ENCODE measurements at regions of chr16 and their contacts with region 1.

Region 1: DNA sequence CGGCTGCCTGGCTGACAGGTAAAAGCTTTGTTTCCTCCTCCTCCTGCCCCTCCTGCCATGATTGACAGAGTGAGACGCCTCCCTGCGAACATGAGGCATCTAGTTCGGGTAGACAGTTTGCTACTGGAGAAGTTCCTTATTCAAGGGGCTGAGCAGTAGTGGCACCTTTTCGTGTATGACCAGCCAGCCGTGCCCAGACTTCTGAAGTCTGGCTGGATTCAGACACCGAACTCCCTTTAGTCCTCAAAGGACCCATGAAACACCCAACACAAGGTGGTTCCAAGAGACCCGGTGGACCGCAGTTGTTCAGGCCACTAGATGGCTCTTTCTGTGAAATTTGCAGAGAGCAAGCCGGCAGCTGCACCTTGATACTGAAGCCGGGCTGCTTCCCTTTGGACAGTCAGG is 192.8 kb downstream of the XYLT1 start:
- DNase-seq: peak in 1 of 2 donors; percentile 21
- ATAC-seq: peak in 5 of 8 donors; percentile 38 to 77 (median 58)
- H3K4me3 ChIP-seq: no peak overlapping the region
- H3K27ac ChIP-seq: no peak overlapping the region
- H3K4me1 ChIP-seq: peaks cover 0 to 15% (median 0%) of the 10 kb centered on the region in 9 donors
- H3K27me3 ChIP-seq: peaks cover 0 to 11% (median 0%) of the 10 kb centered on the region in 7 donors
- CTCF ChIP-seq: peak in 7 of 9 donors; percentile 32 to 60 (median 55)

Region 2: DNA sequence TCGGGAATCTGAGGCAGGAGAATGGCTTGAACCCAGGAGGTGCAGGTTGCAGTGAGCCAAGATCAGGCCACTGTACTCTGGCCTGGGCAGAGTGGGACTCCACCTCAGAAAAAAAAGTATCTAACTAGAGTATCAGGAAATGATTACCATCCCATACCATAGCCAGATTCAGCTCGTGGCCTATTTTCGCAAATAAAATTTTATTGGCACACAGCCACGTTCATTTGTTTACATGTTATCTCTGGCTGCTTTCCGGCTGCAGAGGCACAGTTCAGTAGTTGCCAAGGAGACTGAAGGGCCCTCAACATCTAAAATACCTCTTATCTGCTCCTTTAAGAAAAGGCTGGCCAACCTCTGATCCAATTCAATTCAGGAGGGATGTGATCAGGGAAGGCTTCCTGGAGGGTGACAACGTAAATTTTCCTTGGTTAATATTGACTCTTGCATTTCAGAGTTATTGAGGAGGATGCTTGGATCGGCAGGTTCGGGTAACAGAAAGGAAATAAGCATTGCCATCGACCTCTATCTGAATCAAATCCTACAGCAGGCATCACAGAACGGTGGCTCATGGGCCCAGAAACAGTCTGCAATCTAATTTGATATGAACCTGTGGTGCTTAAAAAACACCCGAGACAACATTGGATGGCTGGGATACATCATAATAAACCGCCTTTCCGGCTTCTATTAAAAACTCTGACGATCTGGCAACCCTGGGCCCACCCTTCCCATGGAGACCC is 119.0 kb after region 1 on chr16:
- intact Hi-C with region 1: no loop called
- DNase-seq: peak in 1 of 2 donors; percentile 35
- ATAC-seq: peak; percentile 48 to 77 (median 60)
- H3K4me3 ChIP-seq: no peak overlapping the region
- H3K27ac ChIP-seq: peak overlapping the region in 3 of 10 donors; percentile 15 to 52 (median 28)
- H3K4me1 ChIP-seq: peaks cover 4 to 31% (median 22%) of the 10 kb centered on the region in 9 donors
- H3K27me3 ChIP-seq: no peaks in the 10 kb centered on the region
- CTCF ChIP-seq: no peak

Region 3: DNA sequence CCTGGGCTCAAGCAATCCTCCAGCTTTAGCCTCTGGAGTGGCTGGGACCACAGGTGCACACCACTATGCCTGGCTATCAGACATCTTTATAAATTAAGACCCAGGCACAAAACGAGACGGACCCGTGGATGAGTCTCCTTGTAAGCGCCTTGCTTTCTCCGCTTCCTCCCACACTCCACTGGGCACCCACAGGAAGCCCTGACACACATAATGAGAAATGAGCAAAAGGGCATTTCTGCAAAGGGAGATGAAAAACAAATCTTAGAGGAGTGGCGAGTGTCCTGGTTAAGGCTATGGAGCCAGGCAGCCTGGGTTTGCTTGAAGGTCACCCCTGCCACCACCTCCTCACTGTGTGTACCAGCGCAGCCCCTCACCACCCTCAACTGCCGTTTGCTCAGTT is 136.4 kb after region 1 on chr16:
- intact Hi-C with region 1: loop called in 1 of 10 experiments (anchors 5 kb)
- DNase-seq: no peak
- ATAC-seq: peak in 1 of 8 donors; percentile 10
- H3K4me3 ChIP-seq: no peak overlapping the region
- H3K27ac ChIP-seq: no peak overlapping the region
- H3K4me1 ChIP-seq: peaks cover 0 to 30% (median 8%) of the 10 kb centered on the region in 9 donors
- H3K27me3 ChIP-seq: no peaks in the 10 kb centered on the region
- CTCF ChIP-seq: no peak

Region 4: GRCh38 chr16:17451843-17452242 is 173.9 kb after region 1 on chr16:
- intact Hi-C with region 1: loop called in 1 of 10 experiments (anchors 5 kb)
- DNase-seq: no peak
- ATAC-seq: peak in 1 of 8 donors; percentile 27
- H3K4me3 ChIP-seq: no peak overlapping the region
- H3K27ac ChIP-seq: peak overlapping the region in 1 of 10 donors; percentile 36
- H3K4me1 ChIP-seq: peaks cover 0 to 52% (median 6%) of the 10 kb centered on the region in 9 donors
- H3K27me3 ChIP-seq: no peaks in the 10 kb centered on the region
- CTCF ChIP-seq: no peak

Measured in heart right ventricle (tissue), 16 donors.